PC-9 (cell line): ENCODE measurements at regions of chr7 and their contacts with region 1.

Region 1: DNA sequence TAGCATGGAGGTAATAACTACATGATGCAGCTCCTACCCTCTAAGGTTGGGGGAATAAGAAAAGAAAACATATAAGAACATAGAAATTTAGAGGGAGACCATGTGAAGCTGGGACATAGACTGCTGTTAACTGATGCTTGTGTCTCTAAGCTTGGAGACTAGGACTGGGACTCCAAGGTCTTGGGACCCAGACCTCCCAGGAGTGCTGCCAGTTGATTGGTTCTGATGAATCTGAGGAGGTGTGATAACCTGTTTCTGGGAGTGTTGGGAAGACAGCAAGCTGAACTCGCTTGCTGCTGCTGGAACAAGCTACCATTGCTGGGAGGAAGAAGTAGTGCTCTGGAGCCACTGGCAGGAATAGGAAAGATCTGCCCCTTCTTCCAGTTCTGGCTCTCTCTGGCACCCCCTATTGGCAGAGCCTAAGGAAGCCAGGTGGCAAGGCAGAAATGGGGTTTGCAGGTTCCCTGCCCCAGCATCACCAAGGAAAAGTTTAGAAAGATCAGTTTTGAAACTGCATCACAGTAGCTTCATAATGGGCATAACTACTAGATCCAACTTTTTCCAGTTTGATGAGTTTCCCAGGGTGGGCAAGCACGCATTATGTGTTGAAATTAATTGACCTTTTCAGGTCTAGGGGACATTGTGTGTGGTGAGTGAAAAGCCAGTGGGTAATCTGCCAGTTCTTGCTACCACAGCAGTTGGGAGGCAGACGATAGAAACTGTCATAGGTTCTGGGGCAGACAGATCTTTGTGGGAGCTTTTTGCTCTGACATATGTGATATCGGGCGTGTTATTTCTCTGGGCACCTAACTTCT is 140.7 kb downstream of the SND1 start:
- DNase-seq: peak in 1 of 2 experiments; percentile 9
- H3K4me3 ChIP-seq: no peak overlapping the region
- H3K27ac ChIP-seq: no peak overlapping the region
- H3K4me1 ChIP-seq: no peaks in the 10 kb centered on the region
- H3K27me3 ChIP-seq: no peaks in the 10 kb centered on the region
- CTCF ChIP-seq: peak; percentile 63

Region 2: DNA sequence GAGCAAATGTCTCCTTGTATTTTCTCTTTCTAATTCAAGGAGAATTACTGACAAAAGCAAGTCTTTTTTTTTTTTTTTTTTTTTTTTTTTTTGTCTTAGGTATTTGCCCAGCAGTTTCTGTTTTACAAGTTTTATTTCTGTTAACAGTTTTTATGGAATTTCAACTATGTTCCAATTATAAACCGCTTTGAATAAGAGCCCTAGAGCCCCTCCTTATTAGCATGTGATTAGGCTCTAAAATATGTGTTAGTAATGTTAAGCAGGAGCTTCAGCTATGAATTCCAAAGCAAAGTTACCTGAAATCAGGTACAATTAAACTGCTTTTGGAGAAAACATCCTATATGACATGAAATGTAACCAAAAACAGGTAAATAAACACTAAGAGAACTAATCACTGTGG is 1866.1 kb before region 1 on chr7:
- CTCF ChIA-PET with region 1: interaction called, 10 read pairs
- POLR2A ChIA-PET with region 1: no interaction called
- intact Hi-C with region 1: no loop called
- DNase-seq: no peak
- H3K4me3 ChIP-seq: no peak overlapping the region
- H3K27ac ChIP-seq: no peak overlapping the region
- H3K4me1 ChIP-seq: no peaks in the 10 kb centered on the region
- H3K27me3 ChIP-seq: no peaks in the 10 kb centered on the region
- CTCF ChIP-seq: no peak

Region 3: GRCh38 chr7:127782075-127782474 is 10.7 kb before region 1 on chr7:
- CTCF ChIA-PET with region 1: no interaction called
- POLR2A ChIA-PET with region 1: interaction called, 12 read pairs
- intact Hi-C with region 1: no loop called
- DNase-seq: no peak
- H3K4me3 ChIP-seq: no peak overlapping the region
- H3K27ac ChIP-seq: no peak overlapping the region
- H3K4me1 ChIP-seq: no peaks in the 10 kb centered on the region
- H3K27me3 ChIP-seq: no peaks in the 10 kb centered on the region
- CTCF ChIP-seq: no peak